ENCODE measurements at regions of chr4 and their contacts with region 1.

Region 1: GRCh38 chr4:105471566-105472176 is 2.2 kb downstream of the PPA2 start:
- DNase-seq: peak; percentile 21 to 75 (median 69)
- ATAC-seq: peak; percentile 53
- H3K4me3 ChIP-seq: peak overlapping the region; percentile 25
- H3K4me3 Mint-ChIP-seq: peak overlapping the region; percentile 59 to 99 (median 82)
- H3K27ac ChIP-seq: peak overlapping the region; percentile 95
- H3K27ac Mint-ChIP-seq: peak overlapping the region; percentile 5 to 100 (median 44)
- H3K4me1 ChIP-seq: peaks cover 18 to 21% of the 10 kb centered on the region in 2 donors
- H3K4me1 Mint-ChIP-seq: peaks cover 42 to 66% (median 63%) of the 10 kb centered on the region in 7 donors
- H3K27me3 ChIP-seq: no peaks in the 10 kb centered on the region
- H3K27me3 Mint-ChIP-seq: peaks cover 0 to 5% (median 0%) of the 10 kb centered on the region in 5 donors

Region 2: GRCh38 chr4:104860238-104861123 is 611.2 kb before region 1 on chr4:
- CTCF ChIA-PET with region 1: no interaction called
- POLR2A ChIA-PET with region 1: no interaction called
- intact Hi-C with region 1: loop called (anchors 1 to 5 kb)
- DNase-seq: peak in 6 of 9 donors; percentile 10 to 36 (median 23)
- ATAC-seq: peak; percentile 69
- H3K4me3 ChIP-seq: no peak overlapping the region
- H3K4me3 Mint-ChIP-seq: no peak overlapping the region
- H3K27ac ChIP-seq: no peak overlapping the region
- H3K27ac Mint-ChIP-seq: no peak overlapping the region
- H3K4me1 ChIP-seq: no peaks in the 10 kb centered on the region
- H3K4me1 Mint-ChIP-seq: no peaks in the 10 kb centered on the region
- H3K27me3 ChIP-seq: no peaks in the 10 kb centered on the region
- H3K27me3 Mint-ChIP-seq: peaks cover 0 to 19% (median 0%) of the 10 kb centered on the region in 5 donors

Region 3: GRCh38 chr4:104966349-104967033 is 505.2 kb before region 1 on chr4:
- CTCF ChIA-PET with region 1: no interaction called
- POLR2A ChIA-PET with region 1: no interaction called
- intact Hi-C with region 1: loop called in 1 of 2 experiments (anchors 2 kb)
- DNase-seq: peak in 5 of 9 donors; percentile 1 to 13 (median 4)
- ATAC-seq: peak; percentile 93
- H3K4me3 ChIP-seq: no peak overlapping the region
- H3K4me3 Mint-ChIP-seq: peak overlapping the region in 8 of 10 donors; percentile 46 to 83 (median 54)
- H3K27ac ChIP-seq: no peak overlapping the region
- H3K27ac Mint-ChIP-seq: peak overlapping the region in 8 of 9 donors; percentile 5 to 89 (median 66)
- H3K4me1 ChIP-seq: peaks cover 0 to 7% of the 10 kb centered on the region in 2 donors
- H3K4me1 Mint-ChIP-seq: peaks cover 4 to 11% (median 9%) of the 10 kb centered on the region in 7 donors
- H3K27me3 ChIP-seq: no peaks in the 10 kb centered on the region
- H3K27me3 Mint-ChIP-seq: peaks cover 2 to 14% (median 6%) of the 10 kb centered on the region in 5 donors

Region 4: DNA sequence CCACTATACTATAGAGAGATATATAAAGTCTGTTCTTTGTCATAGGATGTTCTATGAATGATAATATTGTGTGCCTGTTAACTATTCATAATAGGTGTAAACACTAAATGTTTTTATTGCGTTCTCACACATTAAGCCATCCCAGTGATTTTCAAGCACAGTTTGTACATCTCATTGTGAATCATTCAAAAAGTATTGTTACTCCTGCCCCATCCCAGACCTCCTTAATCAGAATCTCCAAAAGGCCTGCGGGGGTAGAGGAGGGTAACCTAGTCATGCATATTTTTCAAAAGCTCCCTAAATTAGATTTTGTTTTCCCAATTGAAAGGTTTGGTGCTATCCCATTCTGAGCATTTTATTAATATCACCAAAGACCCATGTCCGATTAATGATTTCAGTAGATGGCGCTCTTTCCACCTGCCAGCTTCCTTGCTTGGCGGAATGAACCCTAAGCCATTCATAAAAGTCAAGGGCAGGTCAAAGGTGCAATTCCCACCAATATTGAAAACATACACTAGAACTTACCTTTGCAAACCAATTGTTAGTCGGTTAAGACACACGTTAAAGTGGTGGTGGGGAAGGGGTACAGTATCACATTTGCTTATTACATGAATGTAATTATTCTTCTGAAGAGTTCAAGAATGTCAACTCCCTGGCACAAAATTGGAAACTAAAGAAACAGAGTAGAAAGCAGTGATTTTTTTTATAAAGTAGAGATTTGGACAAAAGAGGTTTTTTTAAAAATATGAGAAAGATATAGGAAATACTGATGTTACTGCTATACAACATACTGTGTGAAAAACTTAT is 330.8 kb before region 1 on chr4:
- CTCF ChIA-PET with region 1: interaction called, 10 read pairs
- POLR2A ChIA-PET with region 1: interaction called, 10 read pairs
- intact Hi-C with region 1: loop called (anchors 1 kb)
- DNase-seq: peak in 8 of 9 donors; percentile 24 to 62 (median 54)
- ATAC-seq: peak; percentile 46
- H3K4me3 ChIP-seq: no peak overlapping the region
- H3K4me3 Mint-ChIP-seq: no peak overlapping the region
- H3K27ac ChIP-seq: no peak overlapping the region
- H3K27ac Mint-ChIP-seq: no peak overlapping the region
- H3K4me1 ChIP-seq: peaks cover 0 to under 1% of the 10 kb centered on the region in 2 donors
- H3K4me1 Mint-ChIP-seq: peaks cover 0 to 17% (median 8%) of the 10 kb centered on the region in 7 donors
- H3K27me3 ChIP-seq: no peaks in the 10 kb centered on the region
- H3K27me3 Mint-ChIP-seq: peaks cover 0 to 2% (median 0%) of the 10 kb centered on the region in 5 donors

Region 5: GRCh38 chr4:105306158-105306781 is 165.4 kb before region 1 on chr4:
- CTCF ChIA-PET with region 1: no interaction called
- POLR2A ChIA-PET with region 1: no interaction called
- intact Hi-C with region 1: loop called in 1 of 2 experiments (anchors 1 kb)
- DNase-seq: peak in 1 of 9 donors; percentile 63
- ATAC-seq: peak; percentile 88
- H3K4me3 ChIP-seq: no peak overlapping the region
- H3K4me3 Mint-ChIP-seq: peak overlapping the region in 1 of 10 donors; percentile 47
- H3K27ac ChIP-seq: no peak overlapping the region
- H3K27ac Mint-ChIP-seq: peak overlapping the region in 1 of 9 donors; percentile 68
- H3K4me1 ChIP-seq: no peaks in the 10 kb centered on the region
- H3K4me1 Mint-ChIP-seq: peaks cover 0 to 22% (median 0%) of the 10 kb centered on the region in 7 donors
- H3K27me3 ChIP-seq: no peaks in the 10 kb centered on the region
- H3K27me3 Mint-ChIP-seq: no peaks in the 10 kb centered on the region

Region 6: GRCh38 chr4:106315968-106316772 is 844.5 kb after region 1 on chr4 and contains the starts of genes AIMP1 and TBCK:
- CTCF ChIA-PET with region 1: interaction called, 3 read pairs
- POLR2A ChIA-PET with region 1: interaction called, 5 read pairs
- intact Hi-C with region 1: loop called (anchors 1 to 2 kb)
- DNase-seq: peak; percentile 74 to 92 (median 88)
- ATAC-seq: peak; percentile 93
- H3K4me3 ChIP-seq: peak within 1 kb of the TSS; percentile 95
- H3K4me3 Mint-ChIP-seq: no peak within 1 kb of the TSS
- H3K27ac ChIP-seq: peak within 1 kb of the TSS; percentile 90
- H3K27ac Mint-ChIP-seq: no peak within 1 kb of the TSS
- H3K4me1 ChIP-seq: peaks cover 22 to 24% of the 10 kb centered on the region in 2 donors
- H3K4me1 Mint-ChIP-seq: peaks cover 23 to 50% (median 43%) of the 10 kb centered on the region in 7 donors
- H3K27me3 ChIP-seq: no peaks in the 10 kb centered on the region
- H3K27me3 Mint-ChIP-seq: no peaks in the 10 kb centered on the region
- total RNA-seq, gene AIMP1: 44.2 to 59.2 (median 56.8) TPM
- total RNA-seq, gene TBCK: 41.3 to 70.7 (median 60.7) TPM

Measured in naive thymus-derived CD4-positive, alpha-beta T cell (primary cell).